ENCODE measurements at regions of chr18 and their contacts with region 1.

Region 1: GRCh38 chr18:12657684-12658425 is at the start of gene SPIRE1:
- DNase-seq: peak; percentile 64
- H3K4me3 ChIP-seq: peak within 1 kb of the TSS; percentile 68 to 86 (median 82)
- H3K27ac ChIP-seq: peak within 1 kb of the TSS; percentile 68
- H3K4me1 ChIP-seq: peaks cover 7% of the 10 kb centered on the region
- H3K27me3 ChIP-seq: no peaks in the 10 kb centered on the region
- CTCF ChIP-seq: no peak
- total RNA-seq, gene SPIRE1: 49.3 to 63.8 TPM

Region 2: DNA sequence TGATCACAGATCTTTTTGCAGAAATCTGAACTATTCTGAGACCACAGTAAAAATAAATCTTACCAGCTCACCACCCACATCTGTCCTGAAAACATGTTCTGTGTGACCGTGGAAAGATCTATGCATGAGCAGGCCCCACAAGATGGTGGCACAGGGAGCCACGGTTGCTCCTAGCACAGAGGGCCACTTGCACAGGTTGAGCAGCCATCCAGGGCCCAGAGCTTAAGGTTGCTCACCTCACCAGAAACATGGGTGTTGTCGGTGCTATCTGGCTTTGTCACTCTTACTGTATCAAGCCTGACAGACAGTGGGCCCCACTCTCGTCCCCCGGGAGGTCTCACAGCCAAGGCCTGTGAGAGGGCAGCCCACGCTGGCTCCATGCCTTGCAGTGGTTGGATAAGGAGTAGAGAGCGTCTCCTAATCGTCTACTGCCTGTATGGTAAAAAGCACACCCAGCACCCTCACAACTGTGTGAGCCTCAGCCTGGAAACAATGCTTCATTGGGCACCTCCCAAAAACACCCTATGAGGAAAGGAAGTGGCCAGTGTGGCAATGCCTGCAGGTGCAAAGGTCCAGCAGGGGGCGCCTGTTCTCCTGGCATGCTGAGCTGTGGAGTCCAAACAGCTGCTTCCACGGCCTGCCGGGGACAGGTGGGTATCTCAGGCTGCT is 330.2 kb before region 1 on chr18:
- CTCF ChIA-PET with region 1: no interaction called
- dilution Hi-C with region 1: no loop called
- in situ Hi-C with region 1: no loop called
- intact Hi-C with region 1: loop called (anchors 5 kb)
- DNase-seq: peak; percentile 76
- H3K4me3 ChIP-seq: no peak overlapping the region
- H3K27ac ChIP-seq: no peak overlapping the region
- H3K4me1 ChIP-seq: no peaks in the 10 kb centered on the region
- H3K27me3 ChIP-seq: no peaks in the 10 kb centered on the region
- CTCF ChIP-seq: peak; percentile 94 to 98

Region 3: DNA sequence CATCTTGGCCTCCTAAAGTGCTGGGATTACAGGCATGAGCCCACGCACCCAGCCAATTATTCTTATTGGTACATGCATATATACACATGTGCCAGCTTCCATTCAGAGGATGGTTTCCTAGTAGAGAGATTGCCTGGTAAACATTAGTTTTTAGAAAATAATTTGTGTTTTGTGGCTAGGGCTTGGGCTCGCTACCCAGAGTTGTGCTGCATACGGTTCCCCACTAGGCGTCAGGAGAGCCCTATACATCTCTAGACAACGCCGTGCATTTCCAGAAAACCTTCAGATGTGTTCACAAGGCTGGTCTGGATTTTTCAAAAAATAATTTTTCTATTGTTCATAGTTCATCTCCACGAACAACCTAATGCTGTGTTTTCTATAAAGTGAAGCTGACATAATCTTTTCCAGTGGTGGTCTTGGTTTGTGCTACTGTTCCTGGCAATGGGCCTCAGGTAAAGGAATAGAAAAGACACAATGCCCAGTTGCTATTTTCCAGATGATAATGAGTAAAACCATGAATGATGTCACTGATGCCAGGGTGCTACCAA is 266.2 kb before region 1 on chr18:
- CTCF ChIA-PET with region 1: interaction called, 3 read pairs
- dilution Hi-C with region 1: no loop called
- in situ Hi-C with region 1: loop called in 1 of 2 experiments (anchors 10 kb)
- intact Hi-C with region 1: loop called (anchors 1 kb)
- DNase-seq: peak; percentile 48
- H3K4me3 ChIP-seq: no peak overlapping the region
- H3K27ac ChIP-seq: no peak overlapping the region
- H3K4me1 ChIP-seq: no peaks in the 10 kb centered on the region
- H3K27me3 ChIP-seq: no peaks in the 10 kb centered on the region
- CTCF ChIP-seq: peak; percentile 97 to 99

Region 4: DNA sequence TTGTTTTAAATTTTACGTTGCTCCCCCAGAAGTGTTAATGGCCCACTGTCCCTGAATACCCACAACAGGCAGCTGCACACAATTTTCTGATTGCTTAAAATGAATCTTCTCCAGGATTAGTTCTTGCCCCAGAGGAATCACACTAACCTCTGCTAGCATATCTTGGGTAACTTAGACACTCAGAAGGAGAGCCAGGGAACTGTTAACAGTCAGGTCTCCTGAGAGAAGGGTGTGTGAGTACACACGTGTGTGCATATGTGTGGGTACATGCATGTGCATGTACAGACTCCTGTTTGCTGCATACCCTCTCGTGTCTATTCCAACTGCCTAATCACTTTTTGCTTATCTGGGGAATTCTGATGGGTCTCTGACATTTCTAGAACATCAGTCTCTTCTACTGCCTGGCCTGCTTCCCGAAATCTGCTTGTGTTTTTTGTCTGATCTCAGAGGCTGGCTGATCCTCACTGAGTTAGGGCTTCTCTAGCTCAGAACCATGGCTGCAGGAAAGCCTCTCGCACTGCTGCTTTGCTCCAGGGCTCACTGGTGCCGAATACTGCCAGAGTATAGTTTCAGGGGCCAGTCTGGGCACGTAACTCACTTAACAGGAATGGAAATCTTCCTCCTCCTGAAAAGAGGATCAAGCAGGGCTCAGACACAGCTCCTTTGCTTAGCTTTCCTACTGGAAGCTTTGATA is 187.3 kb before region 1 on chr18:
- CTCF ChIA-PET with region 1: no interaction called
- dilution Hi-C with region 1: no loop called
- in situ Hi-C with region 1: no loop called
- intact Hi-C with region 1: loop called (anchors 5 kb)
- DNase-seq: peak; percentile 73
- H3K4me3 ChIP-seq: no peak overlapping the region
- H3K27ac ChIP-seq: no peak overlapping the region
- H3K4me1 ChIP-seq: peaks cover 15% of the 10 kb centered on the region
- H3K27me3 ChIP-seq: no peaks in the 10 kb centered on the region
- CTCF ChIP-seq: no peak

Region 5: DNA sequence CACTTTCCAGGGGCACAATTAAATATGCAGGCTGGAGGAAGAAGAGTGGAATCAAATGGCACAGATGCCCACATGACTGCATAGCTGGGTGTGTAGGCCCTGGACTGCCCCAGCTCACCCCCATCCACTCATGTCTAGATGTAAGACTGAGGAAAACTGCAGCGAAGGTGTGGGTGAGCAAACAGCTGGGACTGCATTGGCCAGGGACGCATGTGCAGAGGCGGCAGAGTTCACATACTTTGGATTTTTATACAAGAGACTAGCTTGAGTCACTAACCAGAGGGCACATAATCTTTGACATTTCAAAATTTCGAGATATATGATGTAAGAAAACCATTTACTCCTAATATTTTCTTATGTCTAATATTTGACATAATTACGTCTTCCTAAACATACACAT is 60.1 kb before region 1 on chr18:
- CTCF ChIA-PET with region 1: no interaction called
- dilution Hi-C with region 1: no loop called
- in situ Hi-C with region 1: no loop called
- intact Hi-C with region 1: loop called (anchors 1 kb)
- DNase-seq: peak; percentile 83
- H3K4me3 ChIP-seq: no peak overlapping the region
- H3K27ac ChIP-seq: peak overlapping the region; percentile 76
- H3K4me1 ChIP-seq: peaks cover 41% of the 10 kb centered on the region
- H3K27me3 ChIP-seq: no peaks in the 10 kb centered on the region
- CTCF ChIP-seq: no peak

Region 6: DNA sequence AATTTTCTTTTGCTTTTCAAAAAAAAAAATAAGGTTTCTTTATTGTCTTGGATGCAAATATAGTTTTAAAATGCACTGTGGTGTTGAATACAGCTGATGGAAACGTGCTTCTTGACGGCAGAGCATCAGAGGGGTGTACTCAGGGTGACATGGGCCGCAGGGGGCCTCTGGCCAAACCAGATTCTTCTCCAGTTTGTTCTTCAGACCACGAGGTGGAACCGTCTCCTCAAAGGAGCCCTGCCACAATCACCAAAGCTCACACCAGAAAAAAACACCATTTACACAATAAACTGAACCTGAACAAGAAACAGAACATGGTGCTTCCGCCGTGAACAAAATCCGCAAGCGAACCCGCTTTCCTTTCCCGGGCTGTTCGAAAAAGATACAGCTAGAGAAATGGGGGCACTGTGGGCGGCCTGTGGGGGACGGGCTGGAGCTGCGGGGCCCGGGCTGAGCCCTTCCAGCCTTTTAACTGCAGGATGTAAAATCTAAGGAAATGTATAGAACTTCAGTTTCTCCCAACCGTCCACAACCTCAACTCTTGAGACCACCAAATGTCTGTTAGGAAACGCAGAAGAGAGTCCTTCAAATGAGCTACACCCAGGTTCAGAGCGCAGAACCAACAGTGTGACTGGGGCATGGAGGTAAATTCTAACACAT is 79.5 kb after region 1 on chr18:
- CTCF ChIA-PET with region 1: no interaction called
- dilution Hi-C with region 1: no loop called
- in situ Hi-C with region 1: no loop called
- intact Hi-C with region 1: no loop called
- DNase-seq: no peak
- H3K4me3 ChIP-seq: no peak overlapping the region
- H3K27ac ChIP-seq: no peak overlapping the region
- H3K4me1 ChIP-seq: peaks cover 8% of the 10 kb centered on the region
- H3K27me3 ChIP-seq: no peaks in the 10 kb centered on the region
- CTCF ChIP-seq: no peak